ENCODE measurements at regions of chr11 and their contacts with region 1.

Region 1: GRCh38 chr11:62340269-62340901 is 3.1 kb downstream of the ASRGL1 start:
- DNase-seq: peak; percentile 40
- H3K4me3 Mint-ChIP-seq: no peak overlapping the region
- H3K27ac Mint-ChIP-seq: no peak overlapping the region
- H3K4me1 Mint-ChIP-seq: peaks cover 16% of the 10 kb centered on the region
- H3K27me3 Mint-ChIP-seq: peaks cover 26% of the 10 kb centered on the region

Region 2: GRCh38 chr11:62123669-62124185 is 216.7 kb before region 1 on chr11 and contains the start of gene INCENP:
- intact Hi-C with region 1: no loop called
- DNase-seq: peak; percentile 95
- H3K4me3 Mint-ChIP-seq: peak within 1 kb of the TSS; percentile 96
- H3K27ac Mint-ChIP-seq: peak within 1 kb of the TSS; percentile 90
- H3K4me1 Mint-ChIP-seq: peaks cover 29% of the 10 kb centered on the region
- H3K27me3 Mint-ChIP-seq: peaks cover 7% of the 10 kb centered on the region
- total RNA-seq, gene INCENP: 105 and 108 TPM in 2 replicates

Region 3: DNA sequence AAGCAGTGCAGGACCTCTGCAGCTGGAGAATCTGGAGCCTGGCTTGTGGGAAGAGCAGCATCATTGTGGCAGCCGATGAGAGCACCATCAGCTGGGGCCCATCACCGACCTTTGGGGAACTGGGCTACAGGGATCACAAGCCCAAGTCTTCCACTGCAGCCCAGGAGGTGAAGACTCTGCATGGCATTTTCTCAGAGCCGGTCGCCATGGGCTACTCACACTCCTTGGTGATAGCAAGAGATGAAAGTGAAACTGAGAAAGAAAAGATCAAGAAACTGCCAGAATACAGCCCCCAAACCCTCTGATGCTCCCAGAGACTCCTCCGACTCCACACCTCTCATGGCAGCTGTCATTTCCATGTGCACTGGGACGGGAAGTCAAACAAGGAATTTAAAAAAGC is 32.5 kb after region 1 on chr11:
- intact Hi-C with region 1: loop called (anchors 1 kb)
- DNase-seq: no peak
- H3K4me3 Mint-ChIP-seq: no peak overlapping the region
- H3K27ac Mint-ChIP-seq: no peak overlapping the region
- H3K4me1 Mint-ChIP-seq: peaks cover 10% of the 10 kb centered on the region
- H3K27me3 Mint-ChIP-seq: no peaks in the 10 kb centered on the region